SK-N-SH (cell line): ENCODE measurements at regions of chr19 and their contacts with region 1.

Region 1: GRCh38 chr19:16382775-16383543 is 58.3 kb downstream of the KLF2 start:
- DNase-seq: peak; percentile 78
- H3K4me3 ChIP-seq: no peak overlapping the region
- H3K27ac ChIP-seq: 0 out of 4 replicates have a peak overlapping the region, but pooled peaks of 1 of the 2 experiments have one; percentile 4
- H3K4me1 ChIP-seq: no peaks in the 10 kb centered on the region
- H3K27me3 ChIP-seq: no peaks in the 10 kb centered on the region
- CTCF ChIP-seq: peak; percentile 75
- EP300 ChIP-seq: no peak
- RAD21 ChIP-seq: peak; percentile 80

Region 2: GRCh38 chr19:16247353-16248182 is 135.4 kb before region 1 on chr19:
- CTCF ChIA-PET with region 1: interaction called, 53 read pairs
- POLR2A ChIA-PET with region 1: no interaction called
- DNase-seq: peak; percentile 93
- H3K4me3 ChIP-seq: peak overlapping the region in 1 of 2 experiments; percentile 51; a peak in 1 of 4 replicates
- H3K27ac ChIP-seq: no peak overlapping the region
- H3K4me1 ChIP-seq: no peaks in the 10 kb centered on the region
- H3K27me3 ChIP-seq: peaks cover 11% of the 10 kb centered on the region; the same call in 1 of the 2 replicates
- CTCF ChIP-seq: peak; percentile 94
- EP300 ChIP-seq: no peak
- RAD21 ChIP-seq: peak; percentile 95

Region 3: DNA sequence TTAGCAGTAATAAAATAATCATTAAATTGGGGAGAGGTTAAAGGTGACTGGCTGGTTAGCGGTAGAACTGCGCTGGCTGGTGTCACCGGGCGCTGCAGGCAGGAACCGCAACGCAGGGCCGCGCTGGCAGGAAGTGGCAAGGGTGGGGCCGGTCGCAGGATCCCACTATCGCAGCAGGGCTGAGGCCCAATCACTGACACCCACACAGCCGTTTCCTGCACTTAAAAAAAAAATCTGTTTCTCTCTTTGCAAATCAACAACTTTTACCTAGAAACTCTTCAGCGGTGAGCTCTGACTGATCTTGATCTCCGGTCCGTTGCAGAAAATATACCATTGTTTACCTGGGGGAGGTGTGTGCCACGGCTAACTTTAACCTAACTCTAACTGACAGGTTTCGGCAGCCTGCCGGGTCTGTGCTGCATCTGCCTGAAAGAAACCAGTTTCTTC is 11.4 kb before region 1 on chr19:
- CTCF ChIA-PET with region 1: interaction called, 13 read pairs
- POLR2A ChIA-PET with region 1: interaction called, 3 read pairs
- DNase-seq: no peak
- H3K4me3 ChIP-seq: no peak overlapping the region
- H3K27ac ChIP-seq: no peak overlapping the region
- H3K4me1 ChIP-seq: no peaks in the 10 kb centered on the region
- H3K27me3 ChIP-seq: no peaks in the 10 kb centered on the region
- CTCF ChIP-seq: no peak
- EP300 ChIP-seq: no peak
- RAD21 ChIP-seq: no peak

Region 4: GRCh38 chr19:16403151-16403977 is 20.4 kb after region 1 on chr19:
- CTCF ChIA-PET with region 1: interaction called, 11 read pairs
- POLR2A ChIA-PET with region 1: no interaction called
- DNase-seq: no peak
- H3K4me3 ChIP-seq: no peak overlapping the region
- H3K27ac ChIP-seq: no peak overlapping the region
- H3K4me1 ChIP-seq: no peaks in the 10 kb centered on the region
- H3K27me3 ChIP-seq: no peaks in the 10 kb centered on the region
- CTCF ChIP-seq: no peak
- EP300 ChIP-seq: no peak
- RAD21 ChIP-seq: no peak